Naive thymus-derived CD4-positive, alpha-beta T cell (primary cell): ENCODE measurements at regions of chr16 and their contacts with region 1.

Region 1: GRCh38 chr16:72008424-72009216 is at the start of gene DHODH:
- DNase-seq: peak; percentile 92 to 99 (median 97)
- ATAC-seq: peak; percentile 100
- H3K4me3 ChIP-seq: peak within 1 kb of the TSS; percentile 100
- H3K4me3 Mint-ChIP-seq: peak within 1 kb of the TSS; percentile 92 to 100 (median 98)
- H3K27ac ChIP-seq: peak within 1 kb of the TSS; percentile 62
- H3K27ac Mint-ChIP-seq: peak within 1 kb of the TSS; percentile 75 to 96 (median 89)
- H3K4me1 ChIP-seq: no peaks in the 10 kb centered on the region
- H3K4me1 Mint-ChIP-seq: peaks cover 9 to 22% (median 16%) of the 10 kb centered on the region in 7 donors
- H3K27me3 ChIP-seq: no peaks in the 10 kb centered on the region
- H3K27me3 Mint-ChIP-seq: peaks cover 0 to 3% (median 0%) of the 10 kb centered on the region in 5 donors
- total RNA-seq, gene DHODH: 4.9 to 15.6 (median 14.0) TPM

Region 2: DNA sequence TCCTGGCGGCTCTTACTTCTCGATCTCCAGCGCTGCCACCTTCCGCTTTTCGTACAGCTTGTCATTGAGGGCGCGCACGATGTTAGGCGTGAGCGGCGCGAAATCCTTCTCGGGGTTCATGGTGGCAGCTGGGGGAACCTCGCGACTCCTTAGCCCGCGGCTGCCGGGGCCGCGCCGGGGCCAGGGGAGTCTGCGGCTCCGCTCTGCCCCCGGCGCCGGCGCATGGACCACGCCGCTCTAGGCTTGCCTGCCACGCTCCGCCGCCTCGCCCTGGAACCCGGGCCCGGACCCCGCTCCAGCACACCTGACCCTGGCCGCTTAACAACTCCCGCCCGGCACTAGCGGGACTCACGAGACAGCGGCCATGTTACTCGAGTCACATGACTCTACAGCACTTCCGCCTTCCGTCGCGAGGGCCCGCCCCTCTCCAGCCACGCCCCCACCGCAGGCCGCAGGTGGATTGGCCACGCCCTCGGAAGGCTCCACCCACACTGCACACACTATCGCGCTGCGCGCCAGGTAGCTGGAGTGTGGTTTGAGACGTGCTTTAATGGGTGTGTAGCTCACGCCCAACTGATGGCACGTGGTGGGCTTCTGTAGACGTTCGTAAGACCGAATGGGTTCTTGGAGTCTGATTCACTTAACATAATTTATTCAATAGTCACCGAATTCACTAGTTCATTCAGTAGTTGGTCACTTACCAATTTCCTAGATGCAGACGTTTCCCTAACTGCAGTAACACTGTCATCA is 1207.7 kb before region 1 on chr16 and contains the start of gene VAC14:
- CTCF ChIA-PET with region 1: no interaction called
- POLR2A ChIA-PET with region 1: no interaction called
- intact Hi-C with region 1: loop called in 1 of 2 experiments (anchors 5 kb)
- DNase-seq: peak; percentile 96 to 99 (median 97)
- ATAC-seq: peak; percentile 99
- H3K4me3 ChIP-seq: peak within 1 kb of the TSS; percentile 90
- H3K4me3 Mint-ChIP-seq: peak within 1 kb of the TSS; percentile 90 to 98 (median 94)
- H3K27ac ChIP-seq: peak within 1 kb of the TSS; percentile 78
- H3K27ac Mint-ChIP-seq: peak within 1 kb of the TSS; percentile 84 to 95 (median 92)
- H3K4me1 ChIP-seq: peaks cover 11 to 17% of the 10 kb centered on the region in 2 donors
- H3K4me1 Mint-ChIP-seq: peaks cover 19 to 49% (median 44%) of the 10 kb centered on the region in 7 donors
- H3K27me3 ChIP-seq: no peaks in the 10 kb centered on the region
- H3K27me3 Mint-ChIP-seq: peaks cover 0 to 15% (median 0%) of the 10 kb centered on the region in 5 donors
- total RNA-seq, gene VAC14: 36.7 to 47.1 (median 45.9) TPM

Region 3: DNA sequence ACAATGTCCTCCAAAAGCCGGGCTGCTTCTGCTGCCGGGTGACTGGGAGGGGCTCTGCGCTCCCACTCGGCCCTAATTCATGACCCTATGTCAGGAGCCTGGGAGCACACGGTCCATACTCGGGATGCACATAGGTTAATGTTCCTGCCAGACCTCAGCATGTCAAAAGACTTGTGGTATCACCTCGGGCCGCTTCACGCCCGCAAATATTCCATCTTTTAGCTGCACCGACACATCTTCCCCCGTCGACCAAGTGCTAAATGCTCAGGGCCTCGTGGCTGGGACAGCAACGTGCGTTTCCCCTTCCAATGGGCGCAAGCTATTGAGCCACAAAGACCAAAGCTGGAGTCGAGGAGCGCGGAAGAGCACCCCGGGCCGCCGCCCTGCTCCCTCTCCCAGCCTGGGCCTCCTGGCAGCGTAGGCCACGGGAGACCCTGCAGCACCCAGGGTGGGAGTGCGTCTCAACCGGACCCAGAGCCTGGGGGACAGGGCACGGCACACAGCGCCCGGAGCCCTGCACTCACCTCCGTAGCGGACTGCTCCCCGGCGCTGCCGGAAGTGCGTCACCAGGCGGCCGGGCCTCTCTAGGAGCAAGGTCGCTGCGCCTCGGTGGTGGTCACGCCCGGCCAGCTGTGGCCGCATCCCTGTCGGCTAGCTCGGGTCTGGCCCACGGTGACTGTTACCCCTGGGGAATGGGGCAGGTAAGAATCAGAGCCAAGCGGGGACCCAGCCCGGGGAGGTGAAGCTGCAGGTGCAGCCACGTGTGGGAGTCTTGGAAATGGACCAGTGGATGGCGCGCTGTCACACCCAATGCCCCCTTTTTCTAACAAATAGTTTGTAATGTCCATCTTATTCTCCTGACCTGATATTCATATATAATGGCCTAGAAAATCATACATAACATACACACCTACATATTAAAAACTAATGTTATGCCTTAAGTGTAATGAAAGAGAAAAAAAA is 546.7 kb before region 1 on chr16 and contains the start of gene ZNF23:
- CTCF ChIA-PET with region 1: no interaction called
- POLR2A ChIA-PET with region 1: no interaction called
- intact Hi-C with region 1: loop called in 1 of 2 experiments (anchors 5 kb)
- DNase-seq: peak; percentile 53 to 84 (median 72)
- ATAC-seq: peak; percentile 99
- H3K4me3 ChIP-seq: peak within 1 kb of the TSS; percentile 92
- H3K4me3 Mint-ChIP-seq: peak within 1 kb of the TSS; percentile 88 to 97 (median 94)
- H3K27ac ChIP-seq: peak within 1 kb of the TSS; percentile 87
- H3K27ac Mint-ChIP-seq: peak within 1 kb of the TSS; percentile 85 to 98 (median 92)
- H3K4me1 ChIP-seq: peaks cover 4 to 6% of the 10 kb centered on the region in 2 donors
- H3K4me1 Mint-ChIP-seq: peaks cover 13 to 39% (median 27%) of the 10 kb centered on the region in 7 donors
- H3K27me3 ChIP-seq: no peaks in the 10 kb centered on the region
- H3K27me3 Mint-ChIP-seq: no peaks in the 10 kb centered on the region
- total RNA-seq, gene ZNF23: 6.5 to 16.0 (median 8.8) TPM

Region 4: DNA sequence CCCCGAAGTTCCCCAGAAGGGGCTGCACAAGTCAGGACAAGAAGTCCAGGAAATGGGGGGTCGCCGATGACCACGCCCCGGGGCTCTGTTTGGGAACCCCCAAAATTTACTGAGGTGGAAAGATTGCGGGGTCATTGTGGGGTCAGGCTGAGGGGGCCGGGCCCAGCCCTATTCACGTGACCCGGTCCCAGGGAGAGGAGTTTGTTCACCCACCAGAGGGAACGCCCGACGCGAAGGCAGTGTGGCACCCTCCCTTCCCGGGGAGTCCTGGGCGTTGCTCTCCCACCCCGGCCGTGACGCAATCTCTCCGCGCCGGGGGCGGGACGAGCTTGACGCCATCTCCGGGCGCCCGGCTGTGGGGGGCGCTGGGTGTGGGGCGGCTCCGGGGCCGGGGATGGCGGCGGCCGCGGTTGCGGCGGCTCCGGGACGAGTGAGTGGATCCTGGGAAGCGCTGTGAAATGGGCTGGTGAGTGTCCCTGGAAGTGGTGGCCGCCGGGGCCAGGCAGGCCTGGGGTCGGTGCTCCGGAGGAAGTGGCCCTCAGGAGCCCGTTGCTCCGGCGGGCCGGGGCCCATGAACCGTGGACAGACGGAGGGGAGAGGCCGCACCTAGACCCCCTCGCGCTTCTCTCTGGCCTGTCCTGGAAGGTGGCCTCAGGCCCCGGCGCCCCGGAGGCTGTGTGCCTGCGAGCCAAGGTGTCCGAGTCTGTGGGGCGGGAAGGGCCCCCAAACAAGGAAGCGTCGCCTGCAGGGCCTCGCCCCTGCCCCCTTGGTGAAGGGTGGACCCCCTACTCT is 162.8 kb before region 1 on chr16 and contains the start of gene ATXN1L:
- CTCF ChIA-PET with region 1: no interaction called
- POLR2A ChIA-PET with region 1: no interaction called
- intact Hi-C with region 1: loop called (anchors 1 kb)
- DNase-seq: peak; percentile 91 to 100 (median 95)
- ATAC-seq: peak; percentile 97
- H3K4me3 ChIP-seq: peak within 1 kb of the TSS; percentile 97
- H3K4me3 Mint-ChIP-seq: peak within 1 kb of the TSS; percentile 92 to 96 (median 94)
- H3K27ac ChIP-seq: peak within 1 kb of the TSS; percentile 92
- H3K27ac Mint-ChIP-seq: peak within 1 kb of the TSS; percentile 95 to 98 (median 97)
- H3K4me1 ChIP-seq: peaks cover 10 to 16% of the 10 kb centered on the region in 2 donors
- H3K4me1 Mint-ChIP-seq: peaks cover 18 to 50% (median 42%) of the 10 kb centered on the region in 7 donors
- H3K27me3 ChIP-seq: no peaks in the 10 kb centered on the region
- H3K27me3 Mint-ChIP-seq: no peaks in the 10 kb centered on the region
- total RNA-seq, gene ATXN1L: 24.6 to 52.9 (median 30.7) TPM

Region 5: DNA sequence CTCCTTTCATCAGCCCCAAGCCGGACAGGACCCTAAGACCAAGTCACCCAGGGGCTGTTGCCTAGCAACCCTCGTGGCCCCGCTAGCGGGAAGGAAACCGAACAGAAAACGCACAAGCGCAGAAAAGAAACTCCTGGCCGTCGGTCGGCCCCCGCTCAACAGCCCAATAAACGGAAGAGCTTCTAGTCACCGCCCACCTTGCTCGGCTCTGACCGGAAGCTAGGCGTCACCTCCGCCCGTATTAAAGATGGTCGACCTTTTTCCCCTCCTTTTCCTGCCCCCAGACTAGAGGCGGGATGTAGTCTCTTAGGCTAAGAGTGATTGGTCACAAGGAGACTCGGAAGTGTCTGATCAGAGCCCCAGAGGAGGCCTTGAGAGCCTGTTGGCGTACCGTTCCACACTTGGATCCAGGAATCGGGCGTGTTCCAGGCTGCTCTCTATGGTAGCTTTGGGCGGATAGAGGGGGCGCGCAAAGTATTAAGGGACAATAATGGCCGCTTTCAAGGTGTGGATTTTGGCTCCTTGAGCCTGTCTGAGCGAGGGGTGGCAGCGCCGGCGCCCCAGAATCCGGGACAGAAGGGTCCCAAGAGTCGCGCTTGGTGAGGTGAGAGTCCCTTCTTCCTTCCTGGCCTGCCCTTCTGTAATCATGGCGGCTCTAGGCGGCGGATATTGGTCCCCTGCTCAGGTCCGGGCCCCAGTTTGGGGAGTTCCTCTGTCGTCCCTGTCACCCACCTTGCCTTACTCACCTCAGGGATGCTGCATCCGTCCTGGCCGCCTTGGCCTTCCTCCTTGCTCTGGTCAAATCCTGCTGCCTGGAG is 85.0 kb after region 1 on chr16 and contains the starts of genes DHX38 and TXNL4B:
- CTCF ChIA-PET with region 1: no interaction called
- POLR2A ChIA-PET with region 1: no interaction called
- intact Hi-C with region 1: loop called (anchors 1 kb)
- DNase-seq: peak; percentile 70 to 95 (median 92)
- ATAC-seq: peak; percentile 98
- H3K4me3 ChIP-seq: peak within 1 kb of the TSS; percentile 86
- H3K4me3 Mint-ChIP-seq: peak within 1 kb of the TSS; percentile 94 to 100 (median 98)
- H3K27ac ChIP-seq: peak within 1 kb of the TSS; percentile 93
- H3K27ac Mint-ChIP-seq: peak within 1 kb of the TSS; percentile 92 to 100 (median 99)
- H3K4me1 ChIP-seq: peaks cover 21 to 24% of the 10 kb centered on the region in 2 donors
- H3K4me1 Mint-ChIP-seq: peaks cover 33 to 70% (median 63%) of the 10 kb centered on the region in 7 donors
- H3K27me3 ChIP-seq: no peaks in the 10 kb centered on the region
- H3K27me3 Mint-ChIP-seq: no peaks in the 10 kb centered on the region
- total RNA-seq, gene DHX38: 90.1 to 113 (median 104) TPM
- total RNA-seq, gene TXNL4B: 12.5 to 20.9 (median 18.5) TPM

Region 6: GRCh38 chr16:72400257-72400882 is 391.8 kb after region 1 on chr16:
- CTCF ChIA-PET with region 1: no interaction called
- POLR2A ChIA-PET with region 1: no interaction called
- intact Hi-C with region 1: no loop called
- DNase-seq: peak in 2 of 9 donors; percentile 2
- ATAC-seq: peak; percentile 58
- H3K4me3 ChIP-seq: no peak overlapping the region
- H3K4me3 Mint-ChIP-seq: no peak overlapping the region
- H3K27ac ChIP-seq: no peak overlapping the region
- H3K27ac Mint-ChIP-seq: no peak overlapping the region
- H3K4me1 ChIP-seq: no peaks in the 10 kb centered on the region
- H3K4me1 Mint-ChIP-seq: no peaks in the 10 kb centered on the region
- H3K27me3 ChIP-seq: no peaks in the 10 kb centered on the region
- H3K27me3 Mint-ChIP-seq: peaks cover 0 to 4% (median 0%) of the 10 kb centered on the region in 5 donors